CD4-positive, alpha-beta T cell (primary cell): ENCODE measurements at regions of chr10 and their contacts with region 1.

Region 1: GRCh38 chr10:72331601-72332422 is 22.9 kb downstream of the DNAJB12 start:
- DNase-seq: peak; percentile 77 to 95 (median 85)
- ATAC-seq: peak; percentile 65
- H3K4me3 ChIP-seq: peak overlapping the region; percentile 24
- H3K4me3 Mint-ChIP-seq: peak overlapping the region; percentile 76
- H3K27ac ChIP-seq: peak overlapping the region; percentile 30 to 71
- H3K27ac Mint-ChIP-seq: peak overlapping the region; percentile 94
- H3K4me1 ChIP-seq: peaks cover 100% of the 10 kb centered on the region
- H3K4me1 Mint-ChIP-seq: peaks cover 91% of the 10 kb centered on the region
- H3K27me3 ChIP-seq: no peaks in the 10 kb centered on the region
- H3K27me3 Mint-ChIP-seq: no peaks in the 10 kb centered on the region
- CTCF ChIP-seq: peak; percentile 12

Region 2: DNA sequence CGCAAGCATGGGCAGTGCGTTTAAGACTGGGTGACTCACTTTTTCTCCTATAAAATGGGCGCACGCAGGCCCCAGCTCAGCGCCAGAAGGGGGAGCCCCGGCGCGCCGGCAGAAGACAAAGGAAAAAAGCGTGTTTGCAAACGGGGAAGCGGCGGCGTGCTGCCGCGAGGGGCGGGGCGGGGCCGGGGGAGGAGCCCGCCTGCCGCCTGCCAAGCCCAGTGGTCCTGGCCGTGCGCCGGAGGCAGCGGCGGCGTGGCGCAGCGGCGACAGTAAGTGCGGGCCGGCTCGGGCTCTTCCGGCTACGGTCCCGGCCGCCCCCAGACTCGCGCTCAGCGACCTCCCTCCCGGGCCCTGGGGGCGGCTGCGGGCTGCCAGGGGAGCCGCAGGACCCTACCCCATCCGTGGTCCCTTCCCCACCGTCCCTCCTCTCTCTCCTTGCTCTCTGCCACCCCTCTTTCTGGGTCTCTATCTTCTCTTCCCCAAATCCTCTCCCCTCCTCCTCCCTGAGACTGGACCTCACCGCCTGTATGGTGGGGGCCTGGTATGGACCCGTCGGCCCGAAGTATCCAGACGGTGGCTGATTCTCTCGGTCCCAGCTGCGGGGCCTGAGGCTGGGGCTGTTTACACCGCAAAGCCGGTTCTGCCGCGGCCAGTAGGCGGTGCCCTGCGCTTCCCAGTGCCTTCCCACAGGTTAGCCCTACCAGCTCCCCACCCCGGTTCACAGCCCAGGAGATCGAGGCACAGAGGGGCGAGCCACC is 1012.6 kb before region 1 on chr10 and contains the start of gene SLC29A3:
- CTCF ChIA-PET with region 1: no interaction called
- POLR2A ChIA-PET with region 1: no interaction called
- intact Hi-C with region 1: loop called in 1 of 2 experiments (anchors 10 kb)
- DNase-seq: peak; percentile 69 to 93 (median 79)
- ATAC-seq: peak; percentile 86
- H3K4me3 ChIP-seq: peak within 1 kb of the TSS; percentile 88
- H3K4me3 Mint-ChIP-seq: peak within 1 kb of the TSS; percentile 97
- H3K27ac ChIP-seq: no peak within 1 kb of the TSS
- H3K27ac Mint-ChIP-seq: peak within 1 kb of the TSS; percentile 66
- H3K4me1 ChIP-seq: peaks cover 32% of the 10 kb centered on the region
- H3K4me1 Mint-ChIP-seq: peaks cover 31% of the 10 kb centered on the region
- H3K27me3 ChIP-seq: no peaks in the 10 kb centered on the region
- H3K27me3 Mint-ChIP-seq: no peaks in the 10 kb centered on the region
- CTCF ChIP-seq: peak; percentile 56
- total RNA-seq, gene SLC29A3: 2.3 to 2.5 TPM

Region 3: GRCh38 chr10:72215652-72216549 is 115.9 kb before region 1 on chr10 and contains the starts of genes ANAPC16 and ASCC1:
- CTCF ChIA-PET with region 1: interaction called, 9 read pairs
- POLR2A ChIA-PET with region 1: interaction called, 14 read pairs
- intact Hi-C with region 1: no loop called
- DNase-seq: peak; percentile 86 to 97 (median 94)
- ATAC-seq: peak; percentile 79
- H3K4me3 ChIP-seq: peak within 1 kb of the TSS; percentile 83
- H3K4me3 Mint-ChIP-seq: peak within 1 kb of the TSS; percentile 97
- H3K27ac ChIP-seq: peak within 1 kb of the TSS; percentile 89 to 98
- H3K27ac Mint-ChIP-seq: peak within 1 kb of the TSS; percentile 94
- H3K4me1 ChIP-seq: peaks cover 62% of the 10 kb centered on the region
- H3K4me1 Mint-ChIP-seq: peaks cover 50% of the 10 kb centered on the region
- H3K27me3 ChIP-seq: no peaks in the 10 kb centered on the region
- H3K27me3 Mint-ChIP-seq: no peaks in the 10 kb centered on the region
- CTCF ChIP-seq: no peak
- total RNA-seq, gene ANAPC16: 61.9 to 64.3 TPM
- total RNA-seq, gene ASCC1: 16.5 to 19.0 TPM

Region 4: GRCh38 chr10:72260588-72261322 is 71.1 kb before region 1 on chr10:
- CTCF ChIA-PET with region 1: interaction called, 19 read pairs
- POLR2A ChIA-PET with region 1: interaction called, 17 read pairs
- intact Hi-C with region 1: no loop called
- DNase-seq: peak; percentile 64 to 91 (median 77)
- ATAC-seq: peak; percentile 76
- H3K4me3 ChIP-seq: peak overlapping the region; percentile 77
- H3K4me3 Mint-ChIP-seq: peak overlapping the region; percentile 84
- H3K27ac ChIP-seq: peak overlapping the region; percentile 68 to 80
- H3K27ac Mint-ChIP-seq: peak overlapping the region; percentile 85
- H3K4me1 ChIP-seq: peaks cover 80% of the 10 kb centered on the region
- H3K4me1 Mint-ChIP-seq: peaks cover 72% of the 10 kb centered on the region
- H3K27me3 ChIP-seq: no peaks in the 10 kb centered on the region
- H3K27me3 Mint-ChIP-seq: no peaks in the 10 kb centered on the region
- CTCF ChIP-seq: no peak

Region 5: GRCh38 chr10:72319416-72320254 is 12.2 kb before region 1 on chr10:
- CTCF ChIA-PET with region 1: interaction called, 11 read pairs
- POLR2A ChIA-PET with region 1: interaction called, 84 read pairs
- intact Hi-C with region 1: loop called in 1 of 2 experiments (anchors 1 kb)
- DNase-seq: peak; percentile 77 to 95 (median 88)
- ATAC-seq: peak; percentile 65
- H3K4me3 ChIP-seq: peak overlapping the region; percentile 52
- H3K4me3 Mint-ChIP-seq: peak overlapping the region; percentile 57
- H3K27ac ChIP-seq: peak overlapping the region; percentile 86 to 95
- H3K27ac Mint-ChIP-seq: peak overlapping the region; percentile 91
- H3K4me1 ChIP-seq: peaks cover 93% of the 10 kb centered on the region
- H3K4me1 Mint-ChIP-seq: peaks cover 89% of the 10 kb centered on the region
- H3K27me3 ChIP-seq: no peaks in the 10 kb centered on the region
- H3K27me3 Mint-ChIP-seq: no peaks in the 10 kb centered on the region
- CTCF ChIP-seq: no peak